ENCODE measurements at regions of chr1 and their contacts with region 1.

Region 1: GRCh38 chr1:52141513-52142219 is at the start of gene ZFYVE9:
- DNase-seq: peak; percentile 54 to 72 (median 69)
- H3K4me3 ChIP-seq: peak within 1 kb of the TSS; percentile 26 to 76 (median 63)
- H3K4me3 Mint-ChIP-seq: peak within 1 kb of the TSS; percentile 75 to 83
- H3K27ac ChIP-seq: no peak within 1 kb of the TSS
- H3K27ac Mint-ChIP-seq: peak within 1 kb of the TSS in 4 of 7 donors; percentile 14 to 43 (median 28)
- H3K4me1 ChIP-seq: peaks cover 31 to 42% of the 10 kb centered on the region in 2 donors
- H3K4me1 Mint-ChIP-seq: peaks cover 34% of the 10 kb centered on the region
- H3K27me3 ChIP-seq: peaks cover 39 to 70% of the 10 kb centered on the region in 2 donors
- H3K27me3 Mint-ChIP-seq: peaks cover 33 to 64% (median 38%) of the 10 kb centered on the region in 3 donors
- CTCF ChIP-seq: peak; percentile 86
- polyA plus RNA-seq, gene ZFYVE9: 0.09 TPM in 1 of 3 donors, not detected in the others

Region 2: GRCh38 chr1:52237430-52237829 is 95.8 kb after region 1 on chr1:
- intact Hi-C with region 1: loop called (anchors 5 kb)
- DNase-seq: peak in 2 of 3 donors; percentile 3 to 5
- H3K4me3 ChIP-seq: no peak overlapping the region
- H3K4me3 Mint-ChIP-seq: peak overlapping the region in 1 of 2 donors; percentile 76
- H3K27ac ChIP-seq: no peak overlapping the region
- H3K27ac Mint-ChIP-seq: no peak overlapping the region
- H3K4me1 ChIP-seq: peaks cover 18 to 28% of the 10 kb centered on the region in 2 donors
- H3K4me1 Mint-ChIP-seq: peaks cover 23% of the 10 kb centered on the region
- H3K27me3 ChIP-seq: peaks cover 93 to 96% of the 10 kb centered on the region in 2 donors
- H3K27me3 Mint-ChIP-seq: peaks cover 84 to 89% (median 87%) of the 10 kb centered on the region in 3 donors
- CTCF ChIP-seq: no peak

Region 3: GRCh38 chr1:52296345-52296744 is 154.7 kb after region 1 on chr1:
- intact Hi-C with region 1: loop called (anchors 5 to 10 kb)
- DNase-seq: peak; percentile 1 to 32 (median 19)
- H3K4me3 ChIP-seq: no peak overlapping the region
- H3K4me3 Mint-ChIP-seq: no peak overlapping the region
- H3K27ac ChIP-seq: no peak overlapping the region
- H3K27ac Mint-ChIP-seq: no peak overlapping the region
- H3K4me1 ChIP-seq: no peaks in the 10 kb centered on the region
- H3K4me1 Mint-ChIP-seq: no peaks in the 10 kb centered on the region
- H3K27me3 ChIP-seq: peaks cover 0 to 11% of the 10 kb centered on the region in 2 donors
- H3K27me3 Mint-ChIP-seq: peaks cover 7 to 24% (median 14%) of the 10 kb centered on the region in 3 donors
- CTCF ChIP-seq: peak; percentile 66